ENCODE measurements at regions of chr4 and their contacts with region 1.

Region 1: GRCh38 chr4:145732895-145733880 is 53.2 kb downstream of the C4orf51 start:
- DNase-seq: peak; percentile 96 to 97
- ATAC-seq: peak; percentile 92 to 97 (median 95)
- H3K4me3 ChIP-seq: peak overlapping the region; percentile 11 to 78 (median 66)
- H3K27ac ChIP-seq: peak overlapping the region; percentile 93 to 100 (median 98)
- H3K4me1 ChIP-seq: peaks cover 12 to 64% (median 42%) of the 10 kb centered on the region in 9 donors
- H3K27me3 ChIP-seq: no peaks in the 10 kb centered on the region
- CTCF ChIP-seq: peak in 1 of 9 donors; percentile 23

Region 2: DNA sequence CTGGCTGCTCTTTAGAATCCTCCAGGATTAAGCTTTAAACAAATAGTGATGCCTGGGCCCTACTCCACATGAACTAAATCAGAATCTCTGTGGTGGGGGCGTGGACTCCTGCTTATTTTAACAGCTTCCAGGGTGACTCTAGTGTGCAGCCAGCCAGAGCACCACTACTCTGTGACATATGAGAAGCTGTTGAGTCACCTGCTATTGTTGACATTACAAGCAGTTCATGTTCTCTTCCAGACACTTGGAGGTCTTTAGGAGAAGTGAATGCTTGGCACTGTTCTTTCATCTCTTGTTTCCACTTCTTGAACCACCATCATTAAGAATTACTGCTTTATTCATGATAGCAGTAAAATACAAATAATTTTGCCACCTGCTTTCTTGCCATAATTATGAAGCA is 53.7 kb before region 1 on chr4:
- intact Hi-C with region 1: loop called in 2 of 10 experiments (anchors 2 to 10 kb)
- DNase-seq: peak in 1 of 2 donors; percentile 30
- ATAC-seq: peak; percentile 76 to 97 (median 92)
- H3K4me3 ChIP-seq: no peak overlapping the region
- H3K27ac ChIP-seq: peak overlapping the region in 7 of 10 donors; percentile 0 to 41 (median 18)
- H3K4me1 ChIP-seq: peaks cover 0 to 29% (median 18%) of the 10 kb centered on the region in 9 donors
- H3K27me3 ChIP-seq: no peaks in the 10 kb centered on the region
- CTCF ChIP-seq: no peak

Region 3: GRCh38 chr4:145808021-145808650 is 74.9 kb after region 1 on chr4:
- intact Hi-C with region 1: loop called in 5 of 10 experiments (anchors 5 to 10 kb)
- DNase-seq: peak in 1 of 2 donors; percentile 7
- ATAC-seq: peak; percentile 31 to 81 (median 72)
- H3K4me3 ChIP-seq: no peak overlapping the region
- H3K27ac ChIP-seq: peak overlapping the region in 7 of 10 donors; percentile 39 to 78 (median 61)
- H3K4me1 ChIP-seq: peaks cover 0 to 50% (median 39%) of the 10 kb centered on the region in 9 donors
- H3K27me3 ChIP-seq: no peaks in the 10 kb centered on the region
- CTCF ChIP-seq: no peak

Region 4: GRCh38 chr4:145840162-145840768 is 107.1 kb after region 1 on chr4:
- intact Hi-C with region 1: loop called in 1 of 10 experiments (anchors 10 kb)
- DNase-seq: no peak
- ATAC-seq: peak in 5 of 8 donors; percentile 55 to 82 (median 73)
- H3K4me3 ChIP-seq: no peak overlapping the region
- H3K27ac ChIP-seq: no peak overlapping the region
- H3K4me1 ChIP-seq: peaks cover 0 to 21% (median 6%) of the 10 kb centered on the region in 9 donors
- H3K27me3 ChIP-seq: no peaks in the 10 kb centered on the region
- CTCF ChIP-seq: peak; percentile 10 to 70 (median 56)

Region 5: GRCh38 chr4:145887241-145887991 is 154.2 kb after region 1 on chr4:
- intact Hi-C with region 1: loop called in 2 of 10 experiments (anchors 10 kb)
- DNase-seq: peak in 1 of 2 donors; percentile 26
- ATAC-seq: peak; percentile 51 to 76 (median 72)
- H3K4me3 ChIP-seq: peak overlapping the region in 2 of 10 donors; percentile 5 to 18
- H3K27ac ChIP-seq: peak overlapping the region in 9 of 10 donors; percentile 8 to 78 (median 59)
- H3K4me1 ChIP-seq: peaks cover 5 to 29% (median 24%) of the 10 kb centered on the region in 9 donors
- H3K27me3 ChIP-seq: no peaks in the 10 kb centered on the region
- CTCF ChIP-seq: peak in 5 of 9 donors; percentile 20 to 56 (median 44)

Region 6: GRCh38 chr4:145936142-145936996 is 203.2 kb after region 1 on chr4:
- intact Hi-C with region 1: loop called in 6 of 10 experiments (anchors 5 to 10 kb)
- DNase-seq: peak; percentile 70 to 76
- ATAC-seq: peak; percentile 65 to 87 (median 73)
- H3K4me3 ChIP-seq: peak overlapping the region; percentile 68 to 88 (median 82)
- H3K27ac ChIP-seq: peak overlapping the region; percentile 84 to 98 (median 96)
- H3K4me1 ChIP-seq: peaks cover 0 to 31% (median 12%) of the 10 kb centered on the region in 9 donors
- H3K27me3 ChIP-seq: peaks cover 0 to 17% (median 0%) of the 10 kb centered on the region in 7 donors
- CTCF ChIP-seq: peak in 4 of 9 donors; percentile 19 to 35 (median 26)

Region 7: GRCh38 chr4:146175541-146176453 is 442.6 kb after region 1 on chr4 and contains the start of gene LSM6:
- intact Hi-C with region 1: loop called in 2 of 10 experiments (anchors 10 kb)
- DNase-seq: peak; percentile 87 to 91
- ATAC-seq: peak; percentile 96 to 99 (median 98)
- H3K4me3 ChIP-seq: peak within 1 kb of the TSS; percentile 74 to 97 (median 94)
- H3K27ac ChIP-seq: peak within 1 kb of the TSS; percentile 80 to 97 (median 95)
- H3K4me1 ChIP-seq: peaks cover 8 to 50% (median 42%) of the 10 kb centered on the region in 9 donors
- H3K27me3 ChIP-seq: no peaks in the 10 kb centered on the region
- CTCF ChIP-seq: peak in 5 of 9 donors; percentile 17 to 48 (median 35)
- total RNA-seq, gene LSM6: 8.7 to 18.0 (median 11.8) TPM

Region 8: GRCh38 chr4:146763560-146763959 is 1030.4 kb after region 1 on chr4:
- intact Hi-C with region 1: no loop called
- DNase-seq: no peak
- ATAC-seq: no peak
- H3K4me3 ChIP-seq: no peak overlapping the region
- H3K27ac ChIP-seq: no peak overlapping the region
- H3K4me1 ChIP-seq: no peaks in the 10 kb centered on the region
- H3K27me3 ChIP-seq: peaks cover 0 to 6% (median 0%) of the 10 kb centered on the region in 7 donors
- CTCF ChIP-seq: no peak